ENCODE measurements at regions of chr3 and their contacts with region 1.

Region 1: GRCh38 chr3:50568947-50569749 is at the start of gene HEMK1:
- DNase-seq: peak; percentile 93
- H3K4me3 Mint-ChIP-seq: peak within 1 kb of the TSS; percentile 95
- H3K27ac Mint-ChIP-seq: peak within 1 kb of the TSS; percentile 96
- H3K4me1 Mint-ChIP-seq: peaks cover 66% of the 10 kb centered on the region
- H3K27me3 Mint-ChIP-seq: no peaks in the 10 kb centered on the region
- total RNA-seq, gene HEMK1: 61.7 and 68.7 TPM in 2 replicates

Region 2: DNA sequence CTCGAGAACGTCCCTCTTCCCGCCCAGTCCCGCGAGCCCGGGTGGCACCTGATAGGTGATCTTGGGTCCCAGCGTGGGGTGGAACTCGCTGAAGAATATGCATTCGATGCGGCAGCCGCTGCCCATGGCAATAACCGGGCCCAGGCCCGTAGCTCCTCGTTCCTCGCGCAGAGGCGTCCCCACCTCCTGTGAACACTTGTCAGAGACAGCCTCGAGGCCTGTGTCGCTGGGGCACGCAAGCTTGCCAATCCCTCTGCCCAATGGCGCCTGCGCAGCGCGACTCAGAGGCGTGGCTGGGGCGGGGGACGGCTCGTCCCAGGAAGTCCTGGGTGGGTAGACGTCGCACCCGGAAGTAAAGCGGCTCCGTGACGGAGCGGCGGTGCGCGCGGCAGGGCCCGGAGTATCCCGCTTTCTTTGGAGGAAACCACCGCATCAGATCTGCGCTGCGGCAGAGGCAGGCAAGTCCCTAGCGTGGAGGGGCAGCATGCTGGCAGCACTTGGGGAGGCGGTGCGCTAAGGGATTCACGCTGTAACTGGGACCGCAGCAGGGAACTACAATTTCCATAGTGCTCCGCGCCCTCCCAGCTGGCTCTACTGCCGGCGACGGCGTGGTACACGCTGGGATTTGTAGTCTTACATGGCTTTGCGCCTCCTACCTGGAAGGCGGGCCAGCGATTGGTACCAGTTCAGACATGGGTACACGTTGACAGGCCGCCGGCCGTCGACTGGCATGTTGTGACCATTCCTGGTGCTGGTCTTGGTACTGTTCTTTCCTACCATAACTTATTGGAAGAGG is 218.4 kb before region 1 on chr3 and contains the starts of genes CYB561D2 and NPRL2:
- intact Hi-C with region 1: loop called (anchors 5 kb)
- DNase-seq: peak; percentile 99
- H3K4me3 Mint-ChIP-seq: peak within 1 kb of the TSS; percentile 91
- H3K27ac Mint-ChIP-seq: peak within 1 kb of the TSS; percentile 96
- H3K4me1 Mint-ChIP-seq: peaks cover 36% of the 10 kb centered on the region
- H3K27me3 Mint-ChIP-seq: no peaks in the 10 kb centered on the region
- total RNA-seq, gene CYB561D2: 22.9 and 24.6 TPM in 2 replicates
- total RNA-seq, gene NPRL2: 34.5 and 42.7 TPM in 2 replicates

Region 3: DNA sequence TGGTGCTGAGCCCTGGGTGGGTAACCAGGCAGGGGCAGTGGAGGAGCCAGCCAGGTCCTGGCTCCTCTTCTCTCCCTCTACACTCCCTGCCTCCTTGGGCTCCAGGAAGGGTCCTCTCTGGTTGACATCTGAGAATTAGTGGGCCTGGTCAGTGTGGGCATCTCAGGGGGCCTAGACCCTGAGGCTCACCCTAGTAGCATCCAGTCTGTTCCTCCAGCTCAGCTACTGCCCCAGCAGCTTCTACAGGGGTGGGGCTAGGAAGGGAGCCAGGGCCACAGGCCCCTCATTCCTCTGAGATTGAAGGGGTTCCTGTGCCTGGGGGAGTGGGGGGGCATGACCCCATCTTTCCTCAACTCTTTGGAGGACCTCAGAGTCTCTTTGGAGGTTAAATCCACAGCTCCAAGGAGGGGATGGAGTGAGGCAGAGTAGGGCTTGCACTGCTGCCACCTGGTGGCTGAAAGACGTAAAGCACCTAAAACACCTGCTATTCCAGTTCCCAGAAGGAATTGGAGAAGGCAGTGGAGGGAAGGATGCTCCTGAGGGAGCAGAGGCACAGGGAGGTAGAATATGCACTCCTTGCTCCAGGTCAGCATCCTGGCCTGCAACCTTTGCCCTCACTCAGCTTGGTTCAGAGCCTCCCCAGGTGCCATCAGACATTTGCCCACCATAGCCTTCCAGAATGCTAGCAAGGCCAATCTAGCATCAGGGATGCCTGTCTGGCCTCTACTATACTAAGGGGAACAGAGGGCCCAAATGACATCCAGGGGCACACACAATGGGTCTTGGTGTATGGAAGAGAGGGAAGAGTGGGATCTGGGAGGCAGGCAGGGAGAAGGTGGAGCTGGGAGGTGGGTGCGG is 26.7 kb before region 1 on chr3:
- intact Hi-C with region 1: no loop called
- DNase-seq: peak; percentile 37
- H3K4me3 Mint-ChIP-seq: no peak overlapping the region
- H3K27ac Mint-ChIP-seq: no peak overlapping the region
- H3K4me1 Mint-ChIP-seq: no peaks in the 10 kb centered on the region
- H3K27me3 Mint-ChIP-seq: peaks cover 16% of the 10 kb centered on the region

Region 4: DNA sequence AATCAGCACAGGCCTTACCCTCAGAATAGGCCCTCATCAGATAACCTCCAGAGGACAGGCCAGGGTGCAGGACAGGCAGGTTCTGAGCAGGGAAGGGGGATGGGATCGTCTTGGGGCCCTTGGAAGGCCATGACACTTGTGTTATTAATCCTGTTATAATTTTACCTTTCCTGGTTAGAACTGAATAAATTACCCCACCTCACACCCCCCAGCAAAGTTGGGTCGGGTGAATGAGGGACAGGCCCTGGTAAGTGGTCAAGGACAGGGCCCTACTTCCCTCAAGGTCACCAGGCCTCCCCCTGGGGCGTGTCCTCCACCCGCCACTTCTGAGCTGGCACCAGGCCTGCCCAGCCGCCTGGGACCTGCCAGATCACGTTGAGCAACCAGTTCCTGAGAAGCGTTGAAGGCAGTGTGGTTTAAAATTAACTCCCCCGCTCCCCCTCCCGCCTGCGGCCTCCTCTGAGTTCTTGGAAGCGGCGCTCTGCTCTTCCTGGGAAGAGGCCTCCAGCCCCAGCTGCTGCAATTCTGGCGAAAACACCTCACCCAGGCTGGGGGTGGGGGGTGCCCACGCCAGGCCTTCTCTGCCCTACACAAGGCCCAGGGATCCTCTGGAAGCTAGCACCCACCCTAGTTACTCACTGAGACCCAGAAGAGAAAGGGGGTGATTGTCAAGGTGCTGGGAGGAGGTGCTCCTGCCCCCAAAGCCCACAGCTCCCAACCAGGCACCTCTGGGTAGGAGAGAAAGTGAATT is 31.9 kb after region 1 on chr3:
- intact Hi-C with region 1: loop called (anchors 1 kb)
- DNase-seq: peak; percentile 80
- H3K4me3 Mint-ChIP-seq: peak overlapping the region; percentile 74
- H3K27ac Mint-ChIP-seq: peak overlapping the region; percentile 100
- H3K4me1 Mint-ChIP-seq: peaks cover 81% of the 10 kb centered on the region
- H3K27me3 Mint-ChIP-seq: no peaks in the 10 kb centered on the region

Region 5: GRCh38 chr3:51371943-51372557 is 802.9 kb after region 1 on chr3:
- intact Hi-C with region 1: loop called (anchors 5 kb)
- DNase-seq: no peak
- H3K4me3 Mint-ChIP-seq: no peak overlapping the region
- H3K27ac Mint-ChIP-seq: no peak overlapping the region
- H3K4me1 Mint-ChIP-seq: no peaks in the 10 kb centered on the region
- H3K27me3 Mint-ChIP-seq: peaks cover 5% of the 10 kb centered on the region

Region 6: GRCh38 chr3:51391075-51391567 is 822.0 kb after region 1 on chr3 and contains the start of gene RBM15B:
- intact Hi-C with region 1: loop called (anchors 2 kb)
- DNase-seq: peak; percentile 97
- H3K4me3 Mint-ChIP-seq: peak within 1 kb of the TSS; percentile 82
- H3K27ac Mint-ChIP-seq: peak within 1 kb of the TSS; percentile 83
- H3K4me1 Mint-ChIP-seq: peaks cover 54% of the 10 kb centered on the region
- H3K27me3 Mint-ChIP-seq: no peaks in the 10 kb centered on the region
- total RNA-seq, gene RBM15B: 36.1 and 37.4 TPM in 2 replicates